Activated T-helper 2 cell treated with anti-CD3 and anti-CD28 coated beads, Interferon-gamma antibody, Interleukin-2, Interleukin-4, amounts not matched to agents 10 μg/mL and 5 μg/mL and 100 μg/mL, durations not matched to agents 14 hours and 24 hours and 36 hours (primary cell): ENCODE measurements at regions of chr14 and their contacts with region 1.

Region 1: GRCh38 chr14:98189062-98189461 is 1082.9 kb downstream of the BCL11B start:
- DNase-seq: no peak
- H3K4me3 Mint-ChIP-seq: peak overlapping the region; percentile 71
- H3K27ac Mint-ChIP-seq: peak overlapping the region; percentile 97
- H3K4me1 Mint-ChIP-seq: peaks cover 92% of the 10 kb centered on the region
- H3K27me3 Mint-ChIP-seq: no peaks in the 10 kb centered on the region

Region 2: GRCh38 chr14:98035396-98035795 is 153.7 kb before region 1 on chr14:
- intact Hi-C with region 1: no loop called
- DNase-seq: no peak
- H3K4me3 Mint-ChIP-seq: no peak overlapping the region
- H3K27ac Mint-ChIP-seq: no peak overlapping the region
- H3K4me1 Mint-ChIP-seq: no peaks in the 10 kb centered on the region
- H3K27me3 Mint-ChIP-seq: no peaks in the 10 kb centered on the region

Region 3: DNA sequence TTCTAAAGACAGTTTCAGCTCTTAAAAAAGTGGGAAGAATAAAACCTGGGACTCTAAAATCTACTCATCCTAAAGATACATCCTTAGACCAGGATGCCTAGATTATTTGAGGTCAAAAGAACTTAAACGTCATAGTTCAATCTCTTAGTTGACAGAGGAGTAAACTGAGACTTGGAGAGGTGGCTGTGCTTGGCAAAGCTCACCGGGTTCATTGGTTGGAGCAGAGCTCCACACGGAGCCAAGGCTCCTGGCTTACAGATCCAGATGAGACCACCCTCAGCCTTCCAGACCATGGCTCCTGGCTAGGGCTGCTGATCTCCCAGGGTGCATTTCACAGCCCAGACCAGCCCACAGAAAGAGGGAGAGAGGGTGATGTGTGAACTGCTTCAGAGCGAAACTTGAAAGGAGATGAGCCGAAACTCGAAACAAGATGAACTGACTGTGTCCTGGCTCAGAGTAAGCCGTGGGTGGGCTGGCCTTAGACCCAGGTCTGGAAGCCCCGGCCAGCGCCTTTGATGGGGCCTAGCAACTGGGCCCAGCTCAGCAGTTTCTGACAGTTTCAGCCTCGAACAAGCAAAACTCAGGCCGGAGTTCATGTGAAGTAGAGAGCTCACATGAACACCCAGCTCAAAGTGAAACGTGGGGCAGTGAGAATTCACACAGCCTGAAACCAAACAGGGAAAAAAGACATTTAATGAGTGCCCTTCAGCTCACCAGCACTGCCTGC is 38.1 kb after region 1 on chr14:
- intact Hi-C with region 1: loop called (anchors 5 kb)
- DNase-seq: peak; percentile 30
- H3K4me3 Mint-ChIP-seq: no peak overlapping the region
- H3K27ac Mint-ChIP-seq: peak overlapping the region; percentile 62
- H3K4me1 Mint-ChIP-seq: peaks cover 76% of the 10 kb centered on the region
- H3K27me3 Mint-ChIP-seq: no peaks in the 10 kb centered on the region